ENCODE measurements at regions of chr17 and their contacts with region 1.

Region 1: GRCh38 chr17:82022981-82023374 is at the start of gene LRRC45:
- DNase-seq: peak; percentile 97 to 100 (median 100)
- ATAC-seq: peak; percentile 97
- H3K4me3 ChIP-seq: peak within 1 kb of the TSS; percentile 71
- H3K4me3 Mint-ChIP-seq: peak within 1 kb of the TSS; percentile 80 to 91 (median 84)
- H3K27ac ChIP-seq: peak within 1 kb of the TSS; percentile 65
- H3K27ac Mint-ChIP-seq: peak within 1 kb of the TSS in 7 of 9 donors; percentile 41 to 88 (median 66)
- H3K4me1 ChIP-seq: peaks cover 16 to 29% of the 10 kb centered on the region in 2 donors
- H3K4me1 Mint-ChIP-seq: peaks cover 7 to 28% (median 22%) of the 10 kb centered on the region in 7 donors
- H3K27me3 ChIP-seq: no peaks in the 10 kb centered on the region
- H3K27me3 Mint-ChIP-seq: no peaks in the 10 kb centered on the region
- total RNA-seq, gene LRRC45: 9.2 to 39.1 (median 15.0) TPM

Region 2: DNA sequence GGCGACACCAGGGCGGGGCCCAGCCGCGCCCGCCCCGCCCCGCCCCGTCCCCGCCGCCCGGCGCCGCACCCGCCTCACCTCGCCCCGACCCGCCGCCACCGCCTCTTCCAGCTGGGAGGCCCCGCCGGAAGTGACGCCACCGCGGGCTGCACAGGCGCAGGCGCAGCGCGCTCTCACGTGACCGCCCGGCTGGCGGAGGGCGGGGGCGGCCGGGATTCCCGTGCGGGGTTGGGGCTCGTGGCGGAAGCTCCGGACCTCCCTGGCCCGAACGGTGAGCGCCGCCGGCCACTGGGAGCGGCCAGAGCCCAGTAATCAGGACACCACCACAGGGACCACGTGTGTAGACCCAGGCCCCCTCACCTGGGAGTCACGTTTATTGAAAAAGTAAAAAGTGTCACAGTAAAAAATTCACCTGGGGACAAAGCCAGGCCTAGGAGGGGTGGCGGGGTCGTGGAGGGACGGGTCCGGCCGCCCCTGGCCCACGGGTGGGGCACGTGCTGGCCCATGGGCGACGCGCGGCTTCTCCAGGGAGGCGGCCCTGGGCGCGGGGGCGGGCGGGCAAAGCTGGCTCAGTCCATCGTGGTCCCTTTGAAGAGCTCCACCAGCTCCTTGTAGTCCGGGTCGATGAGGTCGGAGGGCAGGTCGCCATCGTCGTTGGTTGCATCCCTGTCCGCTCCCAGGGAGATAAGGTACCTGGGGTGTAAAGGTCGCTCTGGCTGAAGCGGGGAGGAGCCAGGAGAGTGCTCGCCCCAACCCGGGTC is 189.6 kb before region 1 on chr17 and contains the start of gene MCRIP1:
- CTCF ChIA-PET with region 1: no interaction called
- POLR2A ChIA-PET with region 1: no interaction called
- intact Hi-C with region 1: loop called (anchors 5 kb)
- DNase-seq: peak; percentile 87 to 100 (median 91)
- ATAC-seq: peak; percentile 84
- H3K4me3 ChIP-seq: peak within 1 kb of the TSS; percentile 82
- H3K4me3 Mint-ChIP-seq: peak within 1 kb of the TSS; percentile 75 to 96 (median 92)
- H3K27ac ChIP-seq: peak within 1 kb of the TSS; percentile 91
- H3K27ac Mint-ChIP-seq: peak within 1 kb of the TSS; percentile 81 to 97 (median 91)
- H3K4me1 ChIP-seq: peaks cover 13 to 16% of the 10 kb centered on the region in 2 donors
- H3K4me1 Mint-ChIP-seq: peaks cover 11 to 27% (median 19%) of the 10 kb centered on the region in 7 donors
- H3K27me3 ChIP-seq: no peaks in the 10 kb centered on the region
- H3K27me3 Mint-ChIP-seq: no peaks in the 10 kb centered on the region
- total RNA-seq, gene MCRIP1: 41.1 to 65.3 (median 53.1) TPM

Region 3: DNA sequence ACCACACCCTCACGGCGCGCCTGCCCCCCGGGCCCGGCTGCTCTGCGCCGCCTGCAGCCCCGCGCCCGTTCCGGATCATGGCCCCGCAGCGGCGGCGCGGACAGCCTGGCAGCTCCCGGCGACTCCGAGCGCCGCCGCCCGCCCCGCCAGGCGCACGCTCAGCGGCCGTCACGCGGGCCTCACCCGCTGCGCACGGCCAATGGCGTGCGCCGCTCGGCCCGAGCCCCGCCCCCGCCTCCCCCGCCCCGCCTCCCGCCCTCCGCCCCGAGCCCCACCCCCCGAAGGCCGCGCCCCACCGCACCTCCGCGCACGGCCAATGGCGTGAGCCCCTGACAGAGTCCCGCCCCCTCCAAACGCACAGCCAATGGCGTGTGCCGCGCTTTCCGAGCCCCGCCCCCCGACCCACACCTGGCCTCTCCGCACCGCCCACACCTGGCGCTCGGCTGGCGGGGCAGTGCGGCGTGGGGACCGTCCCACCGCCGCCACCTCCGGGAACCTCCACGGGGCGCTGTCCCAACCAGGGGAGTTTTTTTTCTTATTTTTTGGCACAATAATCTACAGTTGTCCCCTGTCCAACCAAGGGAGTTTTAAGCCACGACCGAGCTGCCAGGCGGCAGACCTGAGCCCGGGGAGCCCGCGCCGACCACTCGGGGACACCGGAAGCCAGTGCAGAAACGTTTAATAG is 111.6 kb before region 1 on chr17 and contains the start of gene PCYT2:
- CTCF ChIA-PET with region 1: no interaction called
- POLR2A ChIA-PET with region 1: no interaction called
- intact Hi-C with region 1: loop called in 1 of 2 experiments (anchors 5 kb)
- DNase-seq: peak; percentile 84 to 95 (median 92)
- ATAC-seq: peak; percentile 97
- H3K4me3 ChIP-seq: peak within 1 kb of the TSS; percentile 70
- H3K4me3 Mint-ChIP-seq: peak within 1 kb of the TSS; percentile 72 to 92 (median 86)
- H3K27ac ChIP-seq: peak within 1 kb of the TSS; percentile 68
- H3K27ac Mint-ChIP-seq: peak within 1 kb of the TSS in 6 of 9 donors; percentile 33 to 85 (median 54)
- H3K4me1 ChIP-seq: peaks cover 8 to 12% of the 10 kb centered on the region in 2 donors
- H3K4me1 Mint-ChIP-seq: peaks cover 6 to 33% (median 16%) of the 10 kb centered on the region in 7 donors
- H3K27me3 ChIP-seq: no peaks in the 10 kb centered on the region
- H3K27me3 Mint-ChIP-seq: no peaks in the 10 kb centered on the region
- total RNA-seq, gene PCYT2: 17.5 to 43.6 (median 35.2) TPM

Region 4: GRCh38 chr17:81967533-81968395 is 55.2 kb before region 1 on chr17:
- CTCF ChIA-PET with region 1: interaction called, 122 read pairs
- POLR2A ChIA-PET with region 1: interaction called, 29 read pairs
- intact Hi-C with region 1: loop called (anchors 2 kb)
- DNase-seq: peak; percentile 62 to 90 (median 89)
- ATAC-seq: peak; percentile 97
- H3K4me3 ChIP-seq: peak overlapping the region; percentile 43
- H3K4me3 Mint-ChIP-seq: peak overlapping the region; percentile 60 to 84 (median 76)
- H3K27ac ChIP-seq: peak overlapping the region; percentile 58
- H3K27ac Mint-ChIP-seq: peak overlapping the region; percentile 68 to 93 (median 84)
- H3K4me1 ChIP-seq: peaks cover 23% of the 10 kb centered on the region in 2 donors
- H3K4me1 Mint-ChIP-seq: peaks cover 4 to 40% (median 20%) of the 10 kb centered on the region in 7 donors
- H3K27me3 ChIP-seq: peaks cover 0 to 2% of the 10 kb centered on the region in 2 donors
- H3K27me3 Mint-ChIP-seq: peaks cover 0 to 25% (median 0%) of the 10 kb centered on the region in 5 donors

Region 5: DNA sequence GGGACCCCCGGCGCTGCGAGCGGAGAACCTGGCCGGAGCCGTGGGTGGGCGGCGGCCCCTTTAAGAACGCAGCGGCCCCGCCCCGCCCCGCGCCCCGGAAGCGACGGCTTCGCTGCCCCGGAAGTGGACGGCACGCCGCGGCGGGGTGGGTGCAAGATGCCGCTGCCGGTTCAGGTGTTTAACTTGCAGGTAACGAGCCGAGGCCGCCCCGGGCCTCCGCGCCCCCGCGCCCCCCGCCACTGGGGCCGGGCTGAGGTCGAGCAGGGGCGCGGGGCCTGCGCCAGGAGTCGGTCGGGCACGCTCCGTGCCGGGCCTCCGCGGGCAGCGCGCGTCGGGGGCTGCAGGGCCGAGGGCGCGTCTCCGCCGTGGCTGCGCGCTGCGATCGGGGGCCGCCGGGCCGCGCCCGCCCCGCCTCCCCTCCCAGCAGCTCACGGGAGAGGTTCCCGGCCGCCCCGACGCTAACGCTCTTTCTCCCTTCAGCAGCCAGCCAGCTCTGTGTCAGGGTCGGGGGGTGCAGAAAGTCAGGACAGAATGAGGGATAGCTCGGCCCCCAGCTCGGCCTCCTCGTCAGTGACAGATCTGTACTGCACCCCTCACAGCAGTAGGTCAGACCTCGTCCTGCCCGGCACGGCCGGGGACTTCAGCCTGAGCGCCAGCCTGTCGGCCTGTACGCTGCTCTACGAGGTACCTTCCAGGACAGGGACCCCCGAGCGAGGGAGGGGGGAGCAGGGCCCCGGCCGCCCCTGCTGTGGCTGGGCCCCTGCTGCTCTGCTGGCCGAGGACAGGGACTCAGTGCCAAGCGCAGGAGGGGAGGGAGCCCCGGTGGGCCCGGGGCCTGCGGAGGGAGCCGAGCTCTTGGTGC is 29.0 kb after region 1 on chr17 and contains the starts of genes GPS1 and RFNG:
- CTCF ChIA-PET with region 1: no interaction called
- POLR2A ChIA-PET with region 1: no interaction called
- intact Hi-C with region 1: loop called in 1 of 2 experiments (anchors 1 kb)
- DNase-seq: peak; percentile 68 to 87 (median 80)
- ATAC-seq: peak; percentile 91
- H3K4me3 ChIP-seq: peak within 1 kb of the TSS; percentile 74
- H3K4me3 Mint-ChIP-seq: peak within 1 kb of the TSS; percentile 60 to 92 (median 86)
- H3K27ac ChIP-seq: peak within 1 kb of the TSS; percentile 72
- H3K27ac Mint-ChIP-seq: peak within 1 kb of the TSS in 8 of 9 donors; percentile 51 to 91 (median 78)
- H3K4me1 ChIP-seq: peaks cover 18 to 31% of the 10 kb centered on the region in 2 donors
- H3K4me1 Mint-ChIP-seq: peaks cover 5 to 28% (median 13%) of the 10 kb centered on the region in 7 donors
- H3K27me3 ChIP-seq: no peaks in the 10 kb centered on the region
- H3K27me3 Mint-ChIP-seq: no peaks in the 10 kb centered on the region
- total RNA-seq, gene GPS1: 68.3 to 88.1 (median 71.7) TPM
- total RNA-seq, gene RFNG: 25.0 to 45.5 (median 31.5) TPM

Region 6: DNA sequence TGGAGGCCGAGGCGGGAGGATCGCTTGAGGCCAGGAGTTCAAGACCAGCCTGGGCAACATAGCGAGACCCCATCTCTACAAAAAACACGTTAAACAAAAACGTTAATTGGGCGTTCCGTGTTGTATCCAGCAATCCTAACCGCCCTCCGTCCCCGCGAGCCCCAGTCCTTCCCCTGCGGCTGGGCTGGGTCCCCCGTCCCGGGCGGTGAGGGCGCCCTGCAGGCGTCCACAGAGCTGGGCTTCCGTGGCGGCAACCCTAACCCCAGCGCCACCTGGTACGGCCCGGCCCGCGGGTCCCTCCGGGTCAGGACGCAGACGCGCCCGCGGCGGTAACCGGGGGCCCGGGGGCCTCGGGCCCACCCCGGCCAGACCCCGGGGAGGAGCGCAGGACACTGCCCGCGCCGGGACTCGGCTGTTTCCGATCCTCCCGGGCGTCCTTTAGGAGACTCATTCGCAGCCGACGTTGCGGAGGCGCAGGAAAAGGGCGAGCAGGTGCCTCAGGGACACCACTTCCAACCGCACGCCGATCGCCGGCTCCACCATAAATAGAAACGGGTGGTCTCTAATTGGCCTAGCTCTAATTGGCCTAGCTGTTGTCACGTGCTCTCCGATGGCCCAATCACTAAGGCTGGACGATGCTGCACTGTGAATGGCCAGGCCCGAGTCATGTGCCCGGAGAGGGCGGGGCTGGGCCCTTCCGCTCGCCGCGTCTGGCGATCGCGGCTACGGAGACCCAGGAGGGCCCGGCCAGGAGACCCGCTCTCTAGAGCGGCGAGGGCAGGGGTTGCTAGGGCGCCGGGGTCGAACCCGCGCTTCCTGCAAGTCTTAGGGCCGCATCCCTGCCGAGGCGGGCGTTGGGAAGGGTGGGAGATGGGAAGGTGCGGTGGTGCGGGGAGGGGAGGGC is 269.5 kb after region 1 on chr17:
- CTCF ChIA-PET with region 1: no interaction called
- POLR2A ChIA-PET with region 1: no interaction called
- intact Hi-C with region 1: loop called (anchors 1 to 5 kb)
- DNase-seq: peak; percentile 76 to 94 (median 91)
- ATAC-seq: peak; percentile 95
- H3K4me3 ChIP-seq: peak overlapping the region; percentile 72
- H3K4me3 Mint-ChIP-seq: peak overlapping the region; percentile 83 to 94 (median 91)
- H3K27ac ChIP-seq: peak overlapping the region; percentile 99
- H3K27ac Mint-ChIP-seq: peak overlapping the region; percentile 86 to 96 (median 92)
- H3K4me1 ChIP-seq: peaks cover 18 to 21% of the 10 kb centered on the region in 2 donors
- H3K4me1 Mint-ChIP-seq: peaks cover 14 to 54% (median 43%) of the 10 kb centered on the region in 7 donors
- H3K27me3 ChIP-seq: no peaks in the 10 kb centered on the region
- H3K27me3 Mint-ChIP-seq: no peaks in the 10 kb centered on the region

Region 7: GRCh38 chr17:82384730-82385481 is 361.9 kb after region 1 on chr17:
- CTCF ChIA-PET with region 1: no interaction called
- POLR2A ChIA-PET with region 1: no interaction called
- intact Hi-C with region 1: no loop called
- DNase-seq: no peak
- ATAC-seq: no peak
- H3K4me3 ChIP-seq: no peak overlapping the region
- H3K4me3 Mint-ChIP-seq: no peak overlapping the region
- H3K27ac ChIP-seq: no peak overlapping the region
- H3K27ac Mint-ChIP-seq: no peak overlapping the region
- H3K4me1 ChIP-seq: peaks cover 0 to 5% of the 10 kb centered on the region in 2 donors
- H3K4me1 Mint-ChIP-seq: peaks cover 5 to 12% (median 7%) of the 10 kb centered on the region in 7 donors
- H3K27me3 ChIP-seq: no peaks in the 10 kb centered on the region
- H3K27me3 Mint-ChIP-seq: peaks cover 13 to 18% (median 16%) of the 10 kb centered on the region in 5 donors

Region 8: GRCh38 chr17:82751571-82752370 is 728.8 kb after region 1 on chr17 and contains the start of gene TBCD:
- CTCF ChIA-PET with region 1: no interaction called
- POLR2A ChIA-PET with region 1: no interaction called
- intact Hi-C with region 1: loop called in 1 of 2 experiments (anchors 2 kb)
- DNase-seq: peak; percentile 80 to 95 (median 90)
- ATAC-seq: peak; percentile 91
- H3K4me3 ChIP-seq: peak within 1 kb of the TSS; percentile 80
- H3K4me3 Mint-ChIP-seq: peak within 1 kb of the TSS; percentile 68 to 91 (median 80)
- H3K27ac ChIP-seq: peak within 1 kb of the TSS; percentile 74
- H3K27ac Mint-ChIP-seq: peak within 1 kb of the TSS in 7 of 9 donors; percentile 11 to 77 (median 58)
- H3K4me1 ChIP-seq: peaks cover 7 to 8% of the 10 kb centered on the region in 2 donors
- H3K4me1 Mint-ChIP-seq: peaks cover 18 to 34% (median 26%) of the 10 kb centered on the region in 7 donors
- H3K27me3 ChIP-seq: no peaks in the 10 kb centered on the region
- H3K27me3 Mint-ChIP-seq: no peaks in the 10 kb centered on the region
- total RNA-seq, gene TBCD: 99.2 to 255 (median 226) TPM